Activated CD4-positive, alpha-beta T cell treated with anti-CD3 and anti-CD28 coated beads, Interleukin-2, amount 10 ng/mL, durations not matched to agents 7 days and 5 days (primary cell): ENCODE measurements at regions of chr19 and their contacts with region 1.

Region 1: GRCh38 chr19:49641688-49642491 is at the start of gene SCAF1:
- DNase-seq: peak; percentile 99
- H3K4me3 Mint-ChIP-seq: peak within 1 kb of the TSS; percentile 93
- H3K27ac Mint-ChIP-seq: peak within 1 kb of the TSS; percentile 99
- H3K4me1 Mint-ChIP-seq: peaks cover 55% of the 10 kb centered on the region
- H3K27me3 Mint-ChIP-seq: peaks cover 7% of the 10 kb centered on the region
- total RNA-seq, gene SCAF1: 48.1 to 59.9 TPM

Region 2: DNA sequence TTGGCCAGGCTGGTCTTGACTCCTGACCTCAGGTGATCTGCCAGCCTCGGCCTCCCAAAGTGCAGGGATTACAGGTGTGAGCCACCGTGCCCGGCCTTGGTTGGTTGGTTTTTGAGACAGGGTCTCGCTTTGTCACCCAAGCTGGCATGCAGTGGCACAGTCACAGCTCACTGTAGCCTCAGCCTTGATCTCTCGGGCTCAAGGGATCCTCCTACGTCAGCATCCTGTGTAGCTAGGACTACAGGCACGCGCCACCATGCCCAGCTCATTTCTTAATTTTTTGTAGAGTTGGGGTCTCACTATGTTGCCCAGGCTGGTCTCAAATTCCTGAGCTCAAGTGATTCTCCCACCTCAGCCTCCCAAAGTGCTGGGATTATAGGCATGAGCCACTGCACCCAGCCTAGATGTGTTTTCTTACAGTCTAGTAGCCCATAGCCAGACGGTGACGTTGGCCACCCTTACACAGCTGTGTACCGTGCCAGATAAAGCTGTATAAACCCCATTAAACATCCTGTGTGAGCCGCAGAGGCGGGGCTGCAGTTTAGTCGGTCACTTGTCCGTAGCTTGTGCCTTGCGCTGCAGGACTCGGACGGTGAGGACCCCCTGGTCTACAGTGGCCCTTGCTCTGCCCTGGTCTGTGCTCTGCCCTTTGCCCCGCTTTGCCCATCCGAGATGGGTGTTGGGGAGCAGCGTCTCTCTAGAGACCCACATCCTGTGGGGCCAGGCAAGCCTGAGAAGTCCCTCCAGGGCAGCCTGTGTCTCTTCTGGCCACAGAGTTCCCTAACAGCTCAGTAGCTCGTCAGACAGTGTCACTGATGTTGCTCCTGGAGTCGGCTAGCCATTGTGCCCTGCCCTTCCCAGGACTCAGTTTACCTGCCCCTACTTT is 13.9 kb after region 1 on chr19:
- CTCF ChIA-PET with region 1: interaction called, 11 read pairs
- POLR2A ChIA-PET with region 1: no interaction called
- DNase-seq: no peak
- H3K4me3 Mint-ChIP-seq: no peak overlapping the region
- H3K27ac Mint-ChIP-seq: no peak overlapping the region
- H3K4me1 Mint-ChIP-seq: peaks cover 2% of the 10 kb centered on the region
- H3K27me3 Mint-ChIP-seq: no peaks in the 10 kb centered on the region

Region 3: DNA sequence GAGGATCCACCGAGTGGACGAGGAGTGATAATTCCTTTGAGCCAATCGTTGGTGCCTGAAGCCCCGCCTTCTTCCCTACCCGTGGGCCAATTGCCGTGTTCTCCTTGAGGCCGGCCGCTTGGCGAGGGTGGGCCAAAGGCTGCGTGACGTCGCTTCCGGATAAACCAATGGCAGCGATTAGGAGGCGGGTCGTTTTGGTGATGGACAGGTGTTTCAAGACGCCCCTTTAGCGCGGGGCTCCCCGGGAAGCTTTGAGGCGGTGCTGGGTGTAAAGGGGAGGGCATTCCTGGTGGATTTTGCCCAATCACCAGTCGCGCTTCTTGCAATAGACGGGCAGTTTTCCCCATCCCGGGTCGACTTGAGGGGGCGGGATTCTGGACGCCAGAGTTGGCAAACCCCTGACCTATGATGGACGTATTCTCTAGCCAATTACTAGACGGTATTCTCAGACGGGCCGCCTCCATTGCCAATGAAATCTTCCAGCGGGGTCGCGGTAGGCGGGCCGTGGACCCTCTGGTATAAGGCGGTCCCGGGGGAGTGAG is 34.9 kb after region 1 on chr19:
- CTCF ChIA-PET with region 1: interaction called, 12 read pairs
- POLR2A ChIA-PET with region 1: interaction called, 3 read pairs
- DNase-seq: peak; percentile 100
- H3K4me3 Mint-ChIP-seq: peak overlapping the region; percentile 89
- H3K27ac Mint-ChIP-seq: peak overlapping the region; percentile 99
- H3K4me1 Mint-ChIP-seq: peaks cover 36% of the 10 kb centered on the region
- H3K27me3 Mint-ChIP-seq: no peaks in the 10 kb centered on the region

Region 4: GRCh38 chr19:49691243-49692146 is 49.6 kb after region 1 on chr19:
- CTCF ChIA-PET with region 1: no interaction called
- POLR2A ChIA-PET with region 1: no interaction called
- DNase-seq: no peak
- H3K4me3 Mint-ChIP-seq: peak overlapping the region; percentile 77
- H3K27ac Mint-ChIP-seq: no peak overlapping the region
- H3K4me1 Mint-ChIP-seq: peaks cover 27% of the 10 kb centered on the region
- H3K27me3 Mint-ChIP-seq: peaks cover 24% of the 10 kb centered on the region